Common myeloid progenitor, CD34-positive (primary cell): ENCODE measurements at regions of chr7 and their contacts with region 1.

Region 1: DNA sequence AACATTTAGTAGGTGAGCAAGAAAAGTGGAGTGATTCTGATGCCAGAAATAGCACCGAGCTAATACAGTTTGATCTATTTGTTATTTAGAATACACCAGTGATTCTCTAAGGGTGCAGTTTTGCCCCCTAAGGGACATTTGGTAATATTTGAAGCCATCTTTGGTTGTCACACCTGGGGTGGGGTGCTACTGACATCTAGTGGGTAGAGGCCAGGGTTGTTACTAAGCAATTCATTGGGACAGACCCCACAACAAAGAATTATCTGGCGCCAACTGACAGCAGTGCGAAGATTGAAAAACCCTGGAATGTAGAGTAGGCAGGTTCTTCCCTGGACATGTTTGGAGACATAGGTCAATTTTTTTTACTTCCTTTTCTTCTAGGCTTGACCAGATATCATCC is 14.6 kb downstream of the PALS2 start:
- DNase-seq: peak; percentile 79 to 83 (median 80)
- H3K4me3 ChIP-seq: no peak overlapping the region
- H3K27ac ChIP-seq: no peak overlapping the region
- H3K4me1 ChIP-seq: no peaks in the 10 kb centered on the region
- H3K27me3 ChIP-seq: no peaks in the 10 kb centered on the region

Region 2: DNA sequence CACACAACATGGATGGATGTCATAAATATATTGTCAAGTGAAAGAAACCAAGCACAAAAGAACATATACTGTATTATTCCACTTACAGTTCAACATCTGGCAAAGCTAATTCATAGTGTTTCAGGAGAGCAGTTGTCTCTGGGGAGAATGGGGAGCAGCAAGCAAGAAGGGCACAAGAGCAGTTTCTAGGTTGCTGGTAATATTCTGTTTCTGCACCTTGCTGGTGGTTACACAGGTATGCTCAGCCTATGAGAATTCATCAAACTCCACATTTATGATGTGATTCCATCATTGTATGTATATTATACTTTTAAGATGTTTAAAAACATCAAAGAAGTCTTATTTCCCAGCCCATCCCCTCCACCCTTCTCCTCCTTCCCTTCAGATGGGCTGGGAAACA is 32.7 kb before region 1 on chr7:
- CTCF ChIA-PET with region 1: no interaction called
- POLR2A ChIA-PET with region 1: no interaction called
- DNase-seq: no peak
- H3K4me3 ChIP-seq: no peak overlapping the region
- H3K27ac ChIP-seq: no peak overlapping the region
- H3K4me1 ChIP-seq: no peaks in the 10 kb centered on the region
- H3K27me3 ChIP-seq: no peaks in the 10 kb centered on the region

Region 3: GRCh38 chr7:24572997-24573625 is 14.7 kb before region 1 on chr7 and contains the start of gene PALS2:
- CTCF ChIA-PET with region 1: interaction called, 34 read pairs
- POLR2A ChIA-PET with region 1: no interaction called
- DNase-seq: peak; percentile 68 to 89 (median 81)
- H3K4me3 ChIP-seq: peak within 1 kb of the TSS; percentile 67 to 97 (median 88)
- H3K27ac ChIP-seq: peak within 1 kb of the TSS in 1 of 2 experiments; percentile 62
- H3K4me1 ChIP-seq: peaks cover 9 to 33% (median 22%) of the 10 kb centered on the region in 4 experiments
- H3K27me3 ChIP-seq: peaks cover 0 to 9% (median 0%) of the 10 kb centered on the region in 5 experiments